ENCODE measurements at regions of chr18 and their contacts with region 1.

Region 1: DNA sequence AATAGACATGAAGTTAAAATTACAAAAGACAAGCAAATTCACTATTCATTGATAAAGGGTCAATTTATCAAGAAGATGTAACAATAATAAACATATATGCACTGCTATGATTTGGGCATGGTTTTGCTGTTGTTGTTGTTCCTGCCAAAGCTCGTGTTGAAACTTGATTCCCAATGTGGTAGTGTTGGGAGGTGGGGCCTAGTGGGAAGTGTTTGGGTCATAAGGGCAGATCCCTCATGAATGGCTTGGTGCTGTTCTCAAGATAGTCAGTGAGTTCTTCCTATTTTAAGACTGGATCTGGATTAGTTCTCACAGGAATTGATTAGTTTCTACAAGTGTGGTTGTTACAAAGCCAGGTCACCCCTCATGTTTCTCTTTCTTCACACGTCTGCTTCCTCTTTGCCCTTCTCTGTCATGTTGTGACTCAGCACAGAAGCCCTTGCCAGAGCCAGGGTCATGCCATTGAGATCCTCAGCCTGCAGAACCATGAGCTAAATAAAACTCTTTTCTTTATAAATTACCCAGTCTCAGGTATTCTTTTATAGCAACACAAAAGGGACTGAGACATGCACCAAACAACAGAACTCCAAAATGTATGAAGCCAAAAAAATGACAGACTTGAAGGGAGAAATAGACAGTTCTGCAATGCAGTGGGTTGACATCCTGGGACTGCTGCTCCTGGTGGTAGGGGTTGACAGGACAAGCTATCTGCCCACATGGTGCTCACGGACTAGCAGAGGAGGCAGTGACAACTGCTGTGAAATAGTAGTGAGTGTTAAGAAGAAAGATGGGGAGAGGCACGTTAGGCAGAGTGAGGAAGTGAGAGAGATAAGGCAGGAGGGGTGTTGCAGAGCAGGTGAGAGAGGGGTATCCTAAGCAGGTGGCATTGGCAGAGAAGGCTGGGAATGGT is 18.6 kb upstream of the SKA1 start:
- H3K4me3 Mint-ChIP-seq: peak overlapping the region; percentile 20
- H3K27ac Mint-ChIP-seq: peak overlapping the region; percentile 21
- H3K4me1 Mint-ChIP-seq: peaks cover 18% of the 10 kb centered on the region
- H3K27me3 Mint-ChIP-seq: peaks cover 16% of the 10 kb centered on the region

Region 2: DNA sequence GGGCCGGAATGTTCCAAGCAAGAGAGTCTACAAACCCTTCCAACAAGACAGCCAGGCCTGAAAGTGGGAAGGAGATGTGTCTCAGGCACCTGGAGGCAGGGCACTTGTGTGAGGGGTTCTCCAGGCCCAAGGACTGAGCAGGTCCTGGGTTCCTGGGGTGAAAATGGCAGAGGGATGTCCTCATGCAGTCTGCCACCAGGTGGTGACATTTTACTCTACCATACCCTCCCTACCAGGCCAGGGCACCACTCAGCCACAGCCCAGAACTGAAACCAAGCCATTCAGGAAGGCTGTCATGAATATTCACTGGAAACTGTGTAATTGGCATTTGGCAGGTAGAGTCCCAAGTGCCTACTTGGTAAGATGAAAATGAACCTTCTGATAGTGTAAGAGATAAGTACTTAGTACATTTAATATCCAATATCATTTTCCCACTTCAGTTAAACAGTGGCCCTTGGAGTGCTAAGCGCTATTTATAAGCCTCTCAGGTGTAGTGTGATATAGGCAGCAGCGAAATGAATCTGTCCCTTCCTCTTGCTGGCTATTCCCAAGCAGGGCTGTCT is 346.4 kb before region 1 on chr18:
- intact Hi-C with region 1: loop called (anchors 5 kb)
- H3K4me3 Mint-ChIP-seq: no peak overlapping the region
- H3K27ac Mint-ChIP-seq: no peak overlapping the region
- H3K4me1 Mint-ChIP-seq: no peaks in the 10 kb centered on the region
- H3K27me3 Mint-ChIP-seq: no peaks in the 10 kb centered on the region

Region 3: DNA sequence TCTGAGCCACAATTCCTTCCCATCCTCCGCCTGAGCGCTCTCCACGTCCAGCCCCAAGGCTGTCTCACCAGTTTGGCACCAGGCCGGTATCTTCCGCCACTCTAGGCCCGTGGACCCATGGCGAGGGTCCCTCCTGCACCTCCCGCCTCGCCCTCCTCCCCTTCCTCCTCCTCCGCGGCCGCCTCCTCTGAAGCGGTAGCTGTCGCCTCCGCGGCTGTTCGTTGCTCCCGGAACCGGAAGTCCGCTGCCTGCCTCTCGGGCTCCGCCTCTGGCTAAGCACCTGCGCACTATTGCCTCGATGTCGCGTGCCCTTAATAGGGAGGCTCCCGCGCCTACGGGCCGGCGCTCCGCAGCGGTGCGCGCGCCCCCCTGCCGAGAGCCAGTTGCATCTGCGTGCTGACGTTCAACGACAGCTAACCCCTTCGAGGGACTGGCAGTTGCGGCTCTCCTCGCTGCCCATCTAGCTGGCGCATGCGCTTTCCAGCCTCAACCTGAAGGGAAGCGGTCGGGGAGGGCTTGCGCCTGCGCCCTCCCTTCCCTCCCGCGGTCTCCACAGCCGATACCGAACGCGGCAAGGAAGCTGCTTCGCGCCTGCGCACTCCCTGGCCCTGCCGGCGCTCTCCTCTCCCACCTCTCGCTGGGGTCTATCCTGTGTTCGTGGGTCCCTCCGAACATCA is 74.9 kb before region 1 on chr18 and contains the start of gene MBD1:
- intact Hi-C with region 1: loop called (anchors 1 kb)
- H3K4me3 Mint-ChIP-seq: peak within 1 kb of the TSS; percentile 95
- H3K27ac Mint-ChIP-seq: peak within 1 kb of the TSS; percentile 92
- H3K4me1 Mint-ChIP-seq: peaks cover 64% of the 10 kb centered on the region
- H3K27me3 Mint-ChIP-seq: no peaks in the 10 kb centered on the region

Region 4: GRCh38 chr18:50388988-50389387 is 32.7 kb after region 1 on chr18:
- intact Hi-C with region 1: no loop called
- H3K4me3 Mint-ChIP-seq: no peak overlapping the region
- H3K27ac Mint-ChIP-seq: no peak overlapping the region
- H3K4me1 Mint-ChIP-seq: no peaks in the 10 kb centered on the region
- H3K27me3 Mint-ChIP-seq: no peaks in the 10 kb centered on the region

Measured in dendritic cell treated with granulocyte-macrophage colony-stimulating factor and Interleukin-4, amounts not matched to agents 40 ng/mL and 50 ng/mL, for 4 days (primary cell).